Endothelial cell of umbilical vein (primary cell): ENCODE measurements at regions of chr1 and their contacts with region 1.

Region 1: DNA sequence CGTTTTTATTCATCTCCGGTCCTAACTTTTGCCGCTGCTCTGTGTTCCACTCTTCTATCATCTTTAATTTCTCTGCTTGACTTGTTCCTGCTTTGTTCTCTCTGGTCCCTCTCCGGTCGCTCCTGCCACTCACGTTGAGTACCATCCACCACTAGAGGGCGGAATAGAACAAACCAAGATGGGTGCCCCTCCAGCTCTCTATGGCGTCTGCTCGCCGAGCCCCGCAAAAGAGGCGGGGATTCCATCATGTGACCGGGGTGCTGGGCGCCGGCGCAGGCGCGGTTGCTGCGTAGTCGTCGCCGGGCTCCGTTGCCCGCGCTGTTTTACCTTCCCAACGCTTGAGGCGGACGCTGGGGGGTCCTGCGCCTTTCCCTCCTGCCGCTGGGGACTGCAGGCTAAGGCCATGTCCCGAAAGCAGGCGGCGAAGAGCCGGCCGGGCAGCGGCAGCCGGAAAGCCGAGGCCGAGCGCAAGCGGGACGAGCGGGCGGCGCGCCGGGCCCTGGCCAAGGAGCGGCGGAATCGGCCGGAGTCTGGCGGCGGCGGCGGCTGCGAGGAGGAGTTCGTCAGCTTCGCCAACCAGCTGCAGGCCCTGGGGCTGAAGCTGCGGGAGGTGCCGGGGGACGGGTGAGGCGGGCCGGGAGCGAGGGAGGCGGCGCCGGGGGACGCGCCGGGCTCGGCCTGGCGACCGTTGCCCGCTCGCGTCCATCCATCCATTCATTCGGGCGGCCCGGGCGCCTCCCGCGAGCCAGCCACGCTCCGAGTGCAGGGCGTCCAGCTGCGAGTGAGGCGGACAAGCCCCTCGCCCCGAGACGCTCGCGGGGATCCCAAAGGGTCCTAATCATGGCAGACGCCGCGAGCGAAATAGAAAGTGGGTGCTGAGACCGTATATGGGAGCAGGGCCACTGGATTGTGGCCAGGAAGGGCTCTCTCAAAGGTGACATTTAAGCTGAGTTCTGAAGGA is at the start of gene OTUD3:
- DNase-seq: peak; percentile 98
- H3K4me3 ChIP-seq: peak within 1 kb of the TSS; percentile 71 to 97 (median 94)
- H3K27ac ChIP-seq: peak within 1 kb of the TSS; percentile 84
- H3K4me1 ChIP-seq: peaks cover 15% of the 10 kb centered on the region
- H3K27me3 ChIP-seq: peaks cover 0 to 2% of the 10 kb centered on the region in 2 experiments
- CTCF ChIP-seq: peak; percentile 87 to 98
- POLR2A ChIP-seq: peak; percentile 70
- total RNA-seq, gene OTUD3: 8.1 and 10.6 TPM in 2 replicates

Region 2: DNA sequence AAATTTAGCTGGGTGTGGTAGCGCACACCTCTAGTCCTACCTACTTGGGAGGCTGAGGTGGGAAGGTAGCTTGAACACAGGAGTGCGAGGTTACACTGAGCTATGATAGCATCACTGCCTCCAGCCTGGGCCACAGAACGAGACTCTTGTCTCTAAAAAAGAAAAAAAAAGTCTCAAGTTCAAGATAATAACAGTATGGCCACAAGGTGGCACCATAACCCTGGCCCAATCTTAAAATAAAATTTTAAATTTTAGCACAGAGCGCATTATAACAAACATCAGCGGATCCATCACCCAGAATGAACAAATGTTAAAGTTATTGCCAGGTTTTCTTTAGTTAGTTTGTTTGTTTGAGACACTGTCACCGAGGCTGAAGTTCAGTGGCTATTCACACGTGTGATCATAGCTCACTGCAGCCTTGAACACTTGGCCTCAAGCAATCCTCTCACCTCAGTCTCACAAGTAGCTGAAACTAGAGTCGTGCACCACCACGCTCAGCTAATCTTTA is 220.6 kb before region 1 on chr1:
- CTCF ChIA-PET with region 1: no interaction called
- POLR2A ChIA-PET with region 1: no interaction called
- dilution Hi-C with region 1: no loop called
- intact Hi-C with region 1: loop called (anchors 5 kb)
- DNase-seq: peak; percentile 57
- H3K4me3 ChIP-seq: no peak overlapping the region
- H3K27ac ChIP-seq: no peak overlapping the region
- H3K4me1 ChIP-seq: peaks cover 3% of the 10 kb centered on the region
- H3K27me3 ChIP-seq: peaks cover 26 to 38% of the 10 kb centered on the region in 2 experiments
- CTCF ChIP-seq: peak; percentile 36 to 56
- POLR2A ChIP-seq: no peak

Region 3: GRCh38 chr1:19762175-19762779 is 120.1 kb before region 1 on chr1:
- CTCF ChIA-PET with region 1: interaction called, 14 read pairs
- POLR2A ChIA-PET with region 1: no interaction called
- dilution Hi-C with region 1: no loop called
- intact Hi-C with region 1: loop called (anchors 1 kb)
- DNase-seq: peak; percentile 50
- H3K4me3 ChIP-seq: no peak overlapping the region
- H3K27ac ChIP-seq: no peak overlapping the region
- H3K4me1 ChIP-seq: peaks cover 20% of the 10 kb centered on the region
- H3K27me3 ChIP-seq: no peaks in the 10 kb centered on the region
- CTCF ChIP-seq: peak; percentile 83 to 86
- POLR2A ChIP-seq: no peak

Region 4: GRCh38 chr1:19866758-19867157 is 15.6 kb before region 1 on chr1:
- CTCF ChIA-PET with region 1: interaction called, 10 read pairs
- POLR2A ChIA-PET with region 1: no interaction called
- dilution Hi-C with region 1: no loop called
- intact Hi-C with region 1: no loop called
- DNase-seq: no peak
- H3K4me3 ChIP-seq: no peak overlapping the region
- H3K27ac ChIP-seq: no peak overlapping the region
- H3K4me1 ChIP-seq: no peaks in the 10 kb centered on the region
- H3K27me3 ChIP-seq: peaks cover 8 to 11% of the 10 kb centered on the region in 2 experiments
- CTCF ChIP-seq: no peak
- POLR2A ChIP-seq: no peak

Region 5: DNA sequence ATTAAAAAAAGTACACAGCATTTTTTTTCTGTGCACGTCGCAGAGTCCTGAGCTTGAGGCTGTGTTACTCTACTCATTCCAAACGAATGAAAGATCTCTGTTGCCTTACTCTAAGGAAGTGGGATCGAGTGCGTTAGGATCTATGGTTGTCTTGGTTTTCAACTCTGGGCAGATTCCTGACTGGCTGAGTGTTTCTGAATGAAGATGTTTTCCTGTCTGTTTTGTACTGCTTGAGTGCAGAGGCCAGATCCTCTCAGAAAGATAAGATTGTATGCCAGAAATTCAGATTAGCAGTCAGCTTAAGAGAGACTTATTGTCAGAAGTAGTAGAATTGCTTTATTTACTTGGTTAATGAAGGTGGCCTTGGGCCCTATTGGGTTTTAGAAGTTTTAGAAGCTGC is 27.0 kb after region 1 on chr1:
- CTCF ChIA-PET with region 1: interaction called, 4 read pairs
- POLR2A ChIA-PET with region 1: no interaction called
- dilution Hi-C with region 1: no loop called
- intact Hi-C with region 1: loop called (anchors 2 kb)
- DNase-seq: no peak
- H3K4me3 ChIP-seq: no peak overlapping the region
- H3K27ac ChIP-seq: no peak overlapping the region
- H3K4me1 ChIP-seq: no peaks in the 10 kb centered on the region
- H3K27me3 ChIP-seq: no peaks in the 10 kb centered on the region
- CTCF ChIP-seq: no peak
- POLR2A ChIP-seq: no peak

Region 6: DNA sequence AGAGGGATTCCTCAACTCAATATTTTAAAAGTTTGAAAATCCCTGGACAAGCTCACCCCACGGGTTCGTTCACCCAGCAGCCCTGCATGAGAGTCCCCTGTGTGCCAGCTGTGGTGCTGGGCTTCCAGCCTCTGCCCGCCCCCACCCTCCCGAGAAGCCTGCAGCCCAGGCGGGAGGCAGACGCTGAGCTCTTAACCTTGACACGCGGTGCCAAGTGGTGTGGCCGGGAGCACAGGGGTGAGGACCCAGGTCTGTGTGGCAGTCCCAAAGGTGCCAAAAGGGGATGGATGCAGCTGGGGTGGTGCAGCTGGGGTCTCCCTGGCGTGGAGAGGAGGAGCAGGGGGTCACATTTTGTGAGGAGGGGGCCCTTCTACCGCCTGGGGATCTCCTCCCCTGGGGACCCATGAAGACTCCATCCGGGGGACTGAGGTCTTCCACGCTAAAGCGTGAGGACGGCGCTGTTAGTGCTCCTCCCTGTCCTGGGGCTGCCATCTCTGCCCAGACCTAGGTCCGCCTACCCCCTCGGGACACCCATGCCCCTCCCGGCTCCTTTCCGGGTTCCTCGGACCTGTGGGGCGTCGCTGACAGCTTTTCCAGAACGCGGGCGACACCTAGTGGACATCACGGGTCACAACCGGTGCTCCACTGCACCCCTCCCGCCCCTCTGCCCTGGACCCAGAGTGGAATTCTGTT is 269.7 kb after region 1 on chr1:
- CTCF ChIA-PET with region 1: interaction called, 4 read pairs
- POLR2A ChIA-PET with region 1: no interaction called
- dilution Hi-C with region 1: no loop called
- intact Hi-C with region 1: loop called (anchors 1 kb)
- DNase-seq: peak; percentile 42
- H3K4me3 ChIP-seq: peak overlapping the region in 1 of 3 experiments; percentile 7
- H3K27ac ChIP-seq: no peak overlapping the region
- H3K4me1 ChIP-seq: peaks cover 4% of the 10 kb centered on the region
- H3K27me3 ChIP-seq: no peaks in the 10 kb centered on the region
- CTCF ChIP-seq: peak; percentile 87 to 91
- POLR2A ChIP-seq: no peak